WTC11 (cell line): ENCODE measurements at regions of chr1 and their contacts with region 1.

Region 1: GRCh38 chr1:22673486-22674409 is 20.7 kb downstream of the C1QB start:
- DNase-seq: peak; percentile 67
- ATAC-seq: peak; percentile 49
- H3K4me3 Mint-ChIP-seq: no peak overlapping the region
- H3K27ac Mint-ChIP-seq: no peak overlapping the region
- H3K4me1 Mint-ChIP-seq: peaks cover 7% of the 10 kb centered on the region; the same call in 1 of the 2 replicates
- H3K27me3 Mint-ChIP-seq: no peaks in the 10 kb centered on the region
- CTCF ChIP-seq: peak; percentile 46

Region 2: DNA sequence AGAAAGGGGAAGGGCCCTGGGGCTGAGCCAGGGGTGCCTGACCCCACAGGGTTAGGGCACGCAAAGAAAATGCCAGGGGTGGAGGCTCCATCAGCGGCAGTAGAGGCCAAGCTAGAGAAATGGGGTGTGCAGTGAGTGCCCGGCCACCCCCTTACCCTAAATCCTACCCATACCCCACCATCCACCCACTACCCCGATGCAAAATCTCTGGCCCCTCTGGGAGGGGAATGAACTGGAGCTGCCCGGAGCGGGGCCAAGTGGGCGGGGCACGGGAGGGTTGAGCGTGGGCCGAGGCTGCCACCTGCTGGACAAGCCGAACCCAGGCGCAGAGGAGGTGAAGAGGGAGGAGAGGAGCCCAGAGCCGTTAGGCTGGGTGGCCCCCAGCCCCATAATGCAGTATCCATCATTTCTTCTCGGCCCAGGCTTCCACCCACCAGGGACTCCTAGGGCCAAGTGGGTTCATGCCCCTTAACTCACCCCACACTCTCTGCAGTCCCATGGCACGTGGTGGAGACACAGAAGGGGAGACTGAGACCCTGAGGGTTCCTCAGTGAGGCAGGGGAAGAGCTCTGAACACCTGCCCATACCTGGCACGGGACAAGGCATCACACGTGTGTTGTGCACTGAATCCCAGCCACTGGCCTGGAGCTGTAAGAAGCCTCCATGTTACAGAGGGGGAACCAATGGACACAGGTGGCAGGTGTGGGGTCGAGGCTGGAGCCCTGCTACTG is 31.7 kb before region 1 on chr1:
- CTCF ChIA-PET with region 1: no interaction called
- POLR2A ChIA-PET with region 1: no interaction called
- DNase-seq: peak; percentile 90
- ATAC-seq: peak; percentile 80
- H3K4me3 Mint-ChIP-seq: no peak overlapping the region
- H3K27ac Mint-ChIP-seq: no peak overlapping the region
- H3K4me1 Mint-ChIP-seq: peaks cover 5% of the 10 kb centered on the region
- H3K27me3 Mint-ChIP-seq: 0 out of 2 replicates have a peak, but pooled peaks cover 4% of the 10 kb centered on the region
- CTCF ChIP-seq: peak; percentile 82

Region 3: GRCh38 chr1:22709891-22710700 is 36.3 kb after region 1 on chr1:
- CTCF ChIA-PET with region 1: interaction called, 25 read pairs
- POLR2A ChIA-PET with region 1: no interaction called
- DNase-seq: peak; percentile 56
- ATAC-seq: peak; percentile 43
- H3K4me3 Mint-ChIP-seq: peak overlapping the region; percentile 72
- H3K27ac Mint-ChIP-seq: no peak overlapping the region
- H3K4me1 Mint-ChIP-seq: 0 out of 2 replicates have a peak, but pooled peaks cover 10% of the 10 kb centered on the region
- H3K27me3 Mint-ChIP-seq: peaks cover 29% of the 10 kb centered on the region
- CTCF ChIP-seq: no peak

Region 4: GRCh38 chr1:22780696-22781095 is 106.9 kb after region 1 on chr1:
- CTCF ChIA-PET with region 1: no interaction called
- POLR2A ChIA-PET with region 1: no interaction called
- DNase-seq: peak; percentile 84
- ATAC-seq: peak; percentile 99
- H3K4me3 Mint-ChIP-seq: no peak overlapping the region
- H3K27ac Mint-ChIP-seq: peak overlapping the region; percentile 84
- H3K4me1 Mint-ChIP-seq: peaks cover 22% of the 10 kb centered on the region
- H3K27me3 Mint-ChIP-seq: no peaks in the 10 kb centered on the region
- CTCF ChIP-seq: no peak